ENCODE measurements at regions of chr3 and their contacts with region 1.

Region 1: DNA sequence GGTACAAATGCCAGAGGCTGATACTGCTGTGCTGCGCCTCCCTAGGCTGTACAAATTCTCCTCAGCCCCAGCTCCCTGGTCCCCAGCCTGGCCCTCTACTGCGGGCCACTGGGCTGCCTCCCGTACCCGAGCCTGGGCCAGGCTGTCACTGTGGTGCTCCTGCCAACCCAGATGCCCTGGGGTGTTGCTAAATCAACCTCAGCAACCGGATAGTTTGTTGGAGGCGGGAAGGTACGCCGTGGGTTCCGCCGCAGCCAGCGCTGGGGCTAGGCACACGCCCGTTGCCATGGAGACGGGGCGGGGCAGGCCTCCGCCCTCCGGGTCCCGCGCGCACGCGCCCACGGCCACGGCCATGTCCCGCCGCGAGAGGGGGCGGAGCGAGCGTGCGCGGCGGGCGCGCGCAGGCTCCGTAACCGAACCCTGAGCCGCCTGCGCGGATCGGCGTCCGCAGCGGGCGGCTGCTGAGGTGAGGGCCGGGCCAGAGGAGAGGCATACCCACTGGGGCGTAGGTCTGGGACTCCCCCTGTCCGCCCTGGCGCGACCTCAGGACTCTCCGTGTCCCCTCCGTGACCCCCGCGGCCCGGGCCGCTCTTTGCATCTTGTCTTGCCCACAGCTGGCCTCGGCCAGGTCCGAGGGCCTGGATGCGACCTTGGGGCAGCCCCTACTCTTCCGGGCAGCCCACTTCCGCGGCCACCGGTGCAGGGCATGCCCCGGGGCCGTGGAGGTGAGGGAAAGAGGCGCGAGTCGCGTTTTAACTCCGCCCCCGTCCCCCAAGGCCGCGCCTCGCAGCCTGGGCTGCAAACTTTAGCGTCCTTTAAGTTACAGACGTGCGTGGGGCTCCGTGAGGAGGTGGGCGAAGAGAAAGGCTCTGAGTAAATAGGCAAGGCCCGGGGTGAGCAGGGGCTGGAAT is at the start of gene TEX264:
- DNase-seq: peak; percentile 97
- H3K4me3 ChIP-seq: peak within 1 kb of the TSS; percentile 85 to 96
- H3K27ac ChIP-seq: peak within 1 kb of the TSS; percentile 73 to 94
- H3K4me1 ChIP-seq: peaks cover 10 to 22% of the 10 kb centered on the region in 2 experiments; a peak in 3 of 4 replicates
- H3K27me3 ChIP-seq: no peaks in the 10 kb centered on the region
- CTCF ChIP-seq: no peak
- EP300 ChIP-seq: no peak
- RAD21 ChIP-seq: no peak
- polyA plus RNA-seq, gene TEX264: 82.1 and 86.0 TPM in 2 replicates

Region 2: GRCh38 chr3:51498876-51499738 is 172.0 kb before region 1 on chr3:
- CTCF ChIA-PET with region 1: interaction called, 209 read pairs
- POLR2A ChIA-PET with region 1: interaction called, 29 read pairs
- DNase-seq: peak; percentile 88
- H3K4me3 ChIP-seq: peak overlapping the region; percentile 52 to 75
- H3K27ac ChIP-seq: peak overlapping the region; percentile 85 to 90
- H3K4me1 ChIP-seq: peaks cover 0 to 4% of the 10 kb centered on the region in 2 experiments; a peak in 2 of 4 replicates
- H3K27me3 ChIP-seq: no peaks in the 10 kb centered on the region
- CTCF ChIP-seq: no peak
- EP300 ChIP-seq: no peak
- RAD21 ChIP-seq: no peak

Region 3: DNA sequence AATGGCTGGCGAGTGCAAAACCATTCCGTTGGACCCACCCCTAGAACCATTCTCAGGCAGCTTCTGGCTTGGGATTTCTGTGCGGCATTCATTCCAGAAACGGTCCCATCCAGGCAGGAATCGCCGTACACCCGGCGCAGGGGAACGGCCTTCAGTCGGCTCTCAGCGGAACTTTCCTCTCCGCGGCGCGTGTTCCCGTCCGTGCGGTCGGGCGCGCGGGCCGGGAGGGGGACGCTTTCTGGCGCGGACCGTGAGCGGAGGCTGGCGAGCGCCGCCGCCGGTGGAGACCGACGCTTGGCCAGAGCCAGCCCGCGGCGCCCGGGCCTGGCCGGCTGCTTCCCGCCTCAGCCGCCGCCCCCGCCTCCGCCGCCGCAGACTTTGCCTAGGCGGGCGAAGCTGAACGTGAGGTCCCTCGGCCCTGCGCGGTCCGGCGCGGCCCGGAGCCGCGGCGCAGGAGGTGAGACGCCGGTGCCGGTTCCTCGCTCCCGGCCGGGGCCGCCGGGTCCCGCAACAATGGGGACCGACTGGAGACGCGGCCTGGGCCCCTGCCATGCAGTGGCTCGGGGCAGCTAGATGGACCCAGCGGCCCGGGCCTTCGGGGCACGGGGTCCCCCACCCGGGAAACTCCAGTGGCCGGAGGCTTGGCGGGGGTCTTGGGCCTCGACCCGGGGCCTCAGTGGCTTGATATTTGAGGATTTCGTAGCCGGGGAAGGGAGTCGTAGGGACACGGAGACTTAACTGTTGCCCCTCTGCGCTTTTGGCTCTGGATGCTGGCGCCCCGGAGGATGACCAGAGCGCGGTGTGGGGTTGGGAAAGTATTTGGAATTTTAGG is 132.4 kb before region 1 on chr3 and contains the start of gene RAD54L2:
- CTCF ChIA-PET with region 1: interaction called, 13 read pairs
- POLR2A ChIA-PET with region 1: interaction called, 4 read pairs
- DNase-seq: peak; percentile 93
- H3K4me3 ChIP-seq: peak within 1 kb of the TSS; percentile 82 to 89
- H3K27ac ChIP-seq: peak within 1 kb of the TSS; percentile 78 to 83
- H3K4me1 ChIP-seq: peaks cover 0 to 14% of the 10 kb centered on the region in 2 experiments; a peak in 3 of 4 replicates
- H3K27me3 ChIP-seq: no peaks in the 10 kb centered on the region
- CTCF ChIP-seq: peak; percentile 17; the same call in 1 of the 2 replicates
- EP300 ChIP-seq: peak; percentile 35 to 48; a peak in 3 of 4 replicates
- RAD21 ChIP-seq: no peak
- polyA plus RNA-seq, gene RAD54L2: 3.6 and 4.1 TPM in 2 replicates

Region 4: DNA sequence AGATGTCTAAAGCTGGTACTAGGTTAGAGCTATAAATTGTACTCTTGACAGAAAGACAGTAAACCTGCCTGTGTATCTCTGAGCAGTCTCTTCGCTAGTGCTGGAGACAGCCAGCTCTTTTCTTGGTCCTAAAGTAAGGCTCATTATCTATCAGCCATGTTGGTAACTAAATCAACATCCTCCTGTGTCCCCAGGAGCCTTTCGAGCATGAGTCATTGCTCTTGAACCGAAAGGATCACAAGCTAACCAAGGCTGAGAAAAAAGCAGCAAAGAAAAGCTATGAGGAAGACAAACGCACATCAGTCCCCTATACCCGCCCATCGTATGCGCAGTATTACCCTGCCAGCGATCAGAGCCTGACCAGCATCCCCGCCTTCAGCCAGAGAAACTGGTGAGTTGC is 25.0 kb before region 1 on chr3:
- CTCF ChIA-PET with region 1: interaction called, 24 read pairs
- POLR2A ChIA-PET with region 1: no interaction called
- DNase-seq: no peak
- H3K4me3 ChIP-seq: no peak overlapping the region
- H3K27ac ChIP-seq: no peak overlapping the region
- H3K4me1 ChIP-seq: no peaks in the 10 kb centered on the region
- H3K27me3 ChIP-seq: no peaks in the 10 kb centered on the region
- CTCF ChIP-seq: no peak
- EP300 ChIP-seq: no peak
- RAD21 ChIP-seq: no peak

Region 5: GRCh38 chr3:51682079-51682478 is 11.0 kb after region 1 on chr3:
- CTCF ChIA-PET with region 1: interaction called, 115 read pairs
- POLR2A ChIA-PET with region 1: interaction called, 8 read pairs
- DNase-seq: peak; percentile 92
- H3K4me3 ChIP-seq: no peak overlapping the region
- H3K27ac ChIP-seq: peak overlapping the region; percentile 36 to 75; a peak in 3 of 4 replicates
- H3K4me1 ChIP-seq: peaks cover 4 to 11% of the 10 kb centered on the region in 2 experiments; a peak in 2 of 4 replicates
- H3K27me3 ChIP-seq: no peaks in the 10 kb centered on the region
- CTCF ChIP-seq: peak; percentile 79
- EP300 ChIP-seq: peak in 1 of 2 experiments; percentile 56; a peak in 2 of 4 replicates
- RAD21 ChIP-seq: peak; percentile 96

Region 6: DNA sequence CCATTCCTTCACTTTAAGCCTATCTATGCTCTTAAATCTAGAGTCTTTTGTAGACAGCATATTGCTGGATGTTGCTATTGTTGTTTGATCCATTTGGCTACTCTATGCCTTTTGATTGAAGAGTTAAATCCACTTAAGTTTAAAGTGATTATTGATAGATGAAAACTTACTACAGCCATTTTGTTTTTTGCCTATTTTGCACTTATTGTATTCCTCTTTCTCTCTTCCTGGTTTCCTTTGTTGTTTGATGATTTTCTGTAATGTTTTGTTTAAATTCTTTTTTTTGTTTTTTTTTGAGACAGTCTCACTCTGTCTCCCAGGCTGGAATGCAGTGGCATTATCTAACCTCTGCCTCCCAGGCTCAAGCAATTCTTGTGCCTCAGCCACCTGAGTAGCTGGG is 88.1 kb after region 1 on chr3:
- CTCF ChIA-PET with region 1: no interaction called
- POLR2A ChIA-PET with region 1: no interaction called
- DNase-seq: no peak
- H3K4me3 ChIP-seq: no peak overlapping the region
- H3K27ac ChIP-seq: no peak overlapping the region
- H3K4me1 ChIP-seq: no peaks in the 10 kb centered on the region
- H3K27me3 ChIP-seq: no peaks in the 10 kb centered on the region
- CTCF ChIP-seq: no peak
- EP300 ChIP-seq: no peak
- RAD21 ChIP-seq: no peak

Region 7: DNA sequence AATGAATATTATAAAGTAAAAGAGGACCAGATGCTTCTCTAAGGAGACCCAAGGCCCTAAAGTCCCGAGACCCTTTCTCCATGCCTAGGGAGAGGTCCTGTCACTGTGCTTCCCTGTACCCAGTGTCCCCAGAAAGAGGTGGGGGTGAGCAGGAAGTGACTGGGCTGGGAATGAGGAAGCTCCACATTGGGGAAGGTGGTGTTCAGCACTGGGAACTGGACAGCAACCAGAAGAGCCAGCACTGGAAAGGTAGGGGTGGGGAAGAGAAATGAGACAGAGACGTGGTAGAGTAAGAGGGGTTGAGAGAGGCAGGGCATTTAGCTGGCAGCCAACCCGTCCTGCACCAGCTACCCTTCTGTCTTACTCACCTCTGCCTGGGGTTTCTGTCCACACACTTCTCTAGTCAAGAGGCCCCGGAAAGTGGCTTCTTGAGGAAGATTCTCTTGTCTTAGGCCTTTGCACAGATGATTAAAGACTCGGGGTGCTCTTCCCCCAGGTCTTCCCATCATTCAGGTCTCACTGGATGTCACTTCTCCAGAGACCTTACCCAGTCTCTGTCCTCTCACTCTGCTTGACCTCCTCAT is 258.4 kb after region 1 on chr3:
- CTCF ChIA-PET with region 1: no interaction called
- POLR2A ChIA-PET with region 1: no interaction called
- DNase-seq: no peak
- H3K4me3 ChIP-seq: no peak overlapping the region
- H3K27ac ChIP-seq: no peak overlapping the region
- H3K4me1 ChIP-seq: no peaks in the 10 kb centered on the region
- H3K27me3 ChIP-seq: no peaks in the 10 kb centered on the region
- CTCF ChIP-seq: no peak
- EP300 ChIP-seq: no peak
- RAD21 ChIP-seq: no peak